ENCODE measurements at regions of chr7 and their contacts with region 1.

Region 1: DNA sequence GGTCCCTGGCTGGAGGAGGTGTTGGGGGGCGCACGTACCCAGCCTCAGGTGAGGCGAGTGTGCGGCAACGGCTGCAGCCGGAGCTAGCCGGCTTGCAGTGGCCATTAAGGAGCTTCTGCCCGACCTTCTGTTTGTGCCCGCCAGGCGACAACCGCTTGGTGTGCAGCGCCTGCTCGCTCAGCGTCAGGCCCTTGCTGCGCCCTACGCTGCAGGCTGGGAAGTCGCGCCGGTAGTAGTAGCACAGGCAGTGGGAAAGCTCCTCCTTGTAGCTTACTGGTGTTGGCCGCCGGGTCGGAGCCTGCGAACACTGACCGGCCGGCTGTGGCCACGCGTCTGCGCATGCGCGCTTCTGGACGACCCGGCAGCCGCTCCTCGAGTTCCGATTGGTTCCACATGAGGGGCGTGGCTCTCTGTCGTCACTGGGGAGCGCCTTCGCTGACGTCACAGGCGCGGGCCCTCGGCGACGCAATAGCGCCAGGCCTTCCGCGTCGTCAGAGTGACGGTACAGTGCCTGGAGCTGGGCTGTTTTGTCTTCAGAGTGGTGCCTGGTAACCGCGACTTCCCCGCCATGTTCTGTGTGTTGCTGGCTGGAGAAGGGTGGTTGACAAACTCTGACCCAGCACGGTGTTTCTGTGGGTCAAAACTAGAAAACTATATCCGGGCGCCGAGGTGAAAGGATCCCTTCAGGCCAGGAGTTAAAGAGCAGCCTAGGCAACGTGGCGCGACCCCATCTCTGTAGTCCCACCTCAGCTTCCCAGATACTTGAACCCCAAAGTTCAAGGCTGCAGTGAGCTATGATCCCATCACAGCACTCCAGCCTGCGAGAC is 76.3 kb upstream of the TMEM248 start:
- DNase-seq: peak; percentile 98 to 99
- H3K4me3 ChIP-seq: peak overlapping the region; percentile 67
- H3K4me3 Mint-ChIP-seq: peak overlapping the region; percentile 92
- H3K27ac Mint-ChIP-seq: peak overlapping the region; percentile 99
- H3K4me1 ChIP-seq: 0 out of 2 replicates have a peak, but pooled peaks cover 5% of the 10 kb centered on the region
- H3K4me1 Mint-ChIP-seq: peaks cover 12% of the 10 kb centered on the region
- H3K27me3 ChIP-seq: no peaks in the 10 kb centered on the region
- H3K27me3 Mint-ChIP-seq: peaks cover 2% of the 10 kb centered on the region
- CTCF ChIP-seq: peak in 1 of 2 experiments; percentile 20

Region 2: GRCh38 chr7:66832531-66833351 is 12.0 kb before region 1 on chr7:
- CTCF ChIA-PET with region 1: no interaction called
- POLR2A ChIA-PET with region 1: no interaction called
- intact Hi-C with region 1: no loop called
- DNase-seq: peak in 1 of 2 experiments; percentile 27
- H3K4me3 ChIP-seq: no peak overlapping the region
- H3K4me3 Mint-ChIP-seq: no peak overlapping the region
- H3K27ac Mint-ChIP-seq: no peak overlapping the region
- H3K4me1 ChIP-seq: no peaks in the 10 kb centered on the region
- H3K4me1 Mint-ChIP-seq: no peaks in the 10 kb centered on the region
- H3K27me3 ChIP-seq: no peaks in the 10 kb centered on the region
- H3K27me3 Mint-ChIP-seq: no peaks in the 10 kb centered on the region
- CTCF ChIP-seq: no peak

Region 3: GRCh38 chr7:66867198-66867790 is 22.5 kb after region 1 on chr7:
- CTCF ChIA-PET with region 1: no interaction called
- POLR2A ChIA-PET with region 1: no interaction called
- intact Hi-C with region 1: loop called (anchors 2 kb)
- DNase-seq: peak in 1 of 2 experiments; percentile 32
- H3K4me3 ChIP-seq: no peak overlapping the region
- H3K4me3 Mint-ChIP-seq: no peak overlapping the region
- H3K27ac Mint-ChIP-seq: no peak overlapping the region
- H3K4me1 ChIP-seq: peaks cover 25% of the 10 kb centered on the region
- H3K4me1 Mint-ChIP-seq: peaks cover 22% of the 10 kb centered on the region
- H3K27me3 ChIP-seq: no peaks in the 10 kb centered on the region
- H3K27me3 Mint-ChIP-seq: no peaks in the 10 kb centered on the region
- CTCF ChIP-seq: no peak

Region 4: GRCh38 chr7:66883716-66884115 is 39.0 kb after region 1 on chr7:
- CTCF ChIA-PET with region 1: no interaction called
- POLR2A ChIA-PET with region 1: no interaction called
- intact Hi-C with region 1: loop called (anchors 5 kb)
- DNase-seq: no peak
- H3K4me3 ChIP-seq: no peak overlapping the region
- H3K4me3 Mint-ChIP-seq: no peak overlapping the region
- H3K27ac Mint-ChIP-seq: no peak overlapping the region
- H3K4me1 ChIP-seq: peaks cover 14% of the 10 kb centered on the region
- H3K4me1 Mint-ChIP-seq: peaks cover 8% of the 10 kb centered on the region
- H3K27me3 ChIP-seq: no peaks in the 10 kb centered on the region
- H3K27me3 Mint-ChIP-seq: no peaks in the 10 kb centered on the region
- CTCF ChIP-seq: no peak

Region 5: GRCh38 chr7:66920769-66921395 is 76.1 kb after region 1 on chr7 and contains the start of gene TMEM248:
- CTCF ChIA-PET with region 1: interaction called, 3 read pairs
- POLR2A ChIA-PET with region 1: interaction called, 13 read pairs
- intact Hi-C with region 1: no loop called
- DNase-seq: peak; percentile 88 to 92
- H3K4me3 ChIP-seq: peak within 1 kb of the TSS; percentile 87
- H3K4me3 Mint-ChIP-seq: peak within 1 kb of the TSS; percentile 95
- H3K27ac Mint-ChIP-seq: peak within 1 kb of the TSS; percentile 89
- H3K4me1 ChIP-seq: peaks cover 8% of the 10 kb centered on the region; the same call in 1 of the 2 replicates
- H3K4me1 Mint-ChIP-seq: peaks cover 13% of the 10 kb centered on the region
- H3K27me3 ChIP-seq: no peaks in the 10 kb centered on the region
- H3K27me3 Mint-ChIP-seq: no peaks in the 10 kb centered on the region
- CTCF ChIP-seq: no peak
- total RNA-seq, gene TMEM248: 98.0 and 99.7 TPM in 2 replicates